ENCODE measurements at regions of chr1 and their contacts with region 1.

Region 1: GRCh38 chr1:65958561-65959350 is 166.1 kb downstream of the PDE4B start:
- DNase-seq: peak in 10 of 14 experiments; percentile 1 to 73 (median 8)
- ATAC-seq: peak; percentile 68
- H3K4me3 ChIP-seq: no peak overlapping the region
- H3K4me3 Mint-ChIP-seq: no peak overlapping the region
- H3K27ac ChIP-seq: no peak overlapping the region
- H3K27ac Mint-ChIP-seq: no peak overlapping the region
- H3K4me1 ChIP-seq: no peaks in the 10 kb centered on the region
- H3K4me1 Mint-ChIP-seq: no peaks in the 10 kb centered on the region
- H3K27me3 ChIP-seq: peaks cover 0 to 5% of the 10 kb centered on the region in 2 experiments
- H3K27me3 Mint-ChIP-seq: no peaks in the 10 kb centered on the region
- CTCF ChIP-seq: peak; percentile 97

Region 2: GRCh38 chr1:65493802-65494201 is 465.0 kb before region 1 on chr1:
- CTCF ChIA-PET with region 1: no interaction called
- POLR2A ChIA-PET with region 1: no interaction called
- intact Hi-C with region 1: no loop called
- DNase-seq: no peak
- ATAC-seq: no peak
- H3K4me3 ChIP-seq: no peak overlapping the region
- H3K4me3 Mint-ChIP-seq: no peak overlapping the region
- H3K27ac ChIP-seq: no peak overlapping the region
- H3K27ac Mint-ChIP-seq: no peak overlapping the region
- H3K4me1 ChIP-seq: no peaks in the 10 kb centered on the region
- H3K4me1 Mint-ChIP-seq: no peaks in the 10 kb centered on the region
- H3K27me3 ChIP-seq: no peaks in the 10 kb centered on the region
- H3K27me3 Mint-ChIP-seq: no peaks in the 10 kb centered on the region
- CTCF ChIP-seq: no peak

Region 3: DNA sequence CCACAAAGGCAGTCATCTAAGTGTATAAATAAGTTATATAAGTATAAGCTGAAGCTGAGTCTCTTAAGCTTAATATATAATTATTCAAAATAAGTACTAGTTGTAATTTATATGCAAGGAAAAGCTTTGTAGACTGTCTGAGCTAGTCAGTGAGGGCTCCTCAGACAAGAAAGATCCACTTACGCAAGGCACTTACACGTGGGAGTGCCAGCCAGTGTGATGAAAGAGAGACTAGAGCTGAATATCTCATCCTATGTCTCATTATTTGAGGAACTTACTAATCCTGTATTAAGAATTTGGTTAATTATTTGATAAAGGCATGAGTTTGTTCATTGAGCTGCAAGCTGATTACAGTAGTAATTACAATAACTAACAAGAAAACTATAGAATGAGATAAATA is 19.1 kb before region 1 on chr1:
- CTCF ChIA-PET with region 1: no interaction called
- POLR2A ChIA-PET with region 1: no interaction called
- intact Hi-C with region 1: no loop called
- DNase-seq: peak in 1 of 14 experiments; percentile 12
- ATAC-seq: no peak
- H3K4me3 ChIP-seq: no peak overlapping the region
- H3K4me3 Mint-ChIP-seq: no peak overlapping the region
- H3K27ac ChIP-seq: no peak overlapping the region
- H3K27ac Mint-ChIP-seq: no peak overlapping the region
- H3K4me1 ChIP-seq: no peaks in the 10 kb centered on the region
- H3K4me1 Mint-ChIP-seq: no peaks in the 10 kb centered on the region
- H3K27me3 ChIP-seq: no peaks in the 10 kb centered on the region
- H3K27me3 Mint-ChIP-seq: peaks cover 6% of the 10 kb centered on the region
- CTCF ChIP-seq: no peak

Region 4: DNA sequence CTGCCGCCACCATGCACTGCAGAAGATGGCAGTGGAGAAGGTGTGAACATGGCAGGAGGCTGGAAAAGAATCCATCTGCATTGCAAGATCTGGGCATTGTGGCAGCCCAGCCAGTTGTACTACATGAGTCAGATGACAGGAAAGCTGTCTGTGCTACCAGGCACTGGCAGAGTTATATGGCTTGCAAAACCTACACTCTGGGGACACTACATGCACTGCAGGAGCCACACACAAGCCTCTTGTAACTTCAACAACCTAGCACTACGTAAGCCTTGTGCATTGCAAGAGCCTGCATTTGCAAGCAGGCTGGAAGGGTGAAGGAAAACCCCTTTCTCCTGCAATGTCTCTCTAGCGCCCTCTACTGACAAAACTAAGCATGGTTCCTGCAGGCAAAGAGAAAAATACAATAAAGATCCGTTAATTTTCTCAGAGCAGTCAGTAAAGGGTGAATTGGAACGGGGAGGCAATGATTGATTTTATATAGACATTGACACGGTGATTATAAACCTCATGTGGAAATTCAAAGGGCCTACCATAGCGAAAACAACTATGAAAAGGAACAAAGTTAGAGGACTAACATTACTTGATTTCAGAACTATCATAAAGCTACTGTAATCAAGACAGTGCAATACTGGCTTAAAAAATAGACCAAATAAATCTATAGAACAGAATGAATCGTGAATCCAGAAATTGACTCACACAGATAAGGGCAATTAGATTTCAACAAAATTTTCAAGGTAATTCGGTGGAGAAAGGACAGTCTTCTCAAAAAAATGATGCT is 767.3 kb after region 1 on chr1:
- CTCF ChIA-PET with region 1: no interaction called
- POLR2A ChIA-PET with region 1: no interaction called
- intact Hi-C with region 1: loop called (anchors 5 kb)
- DNase-seq: peak in 13 of 14 experiments; percentile 3 to 83 (median 33)
- ATAC-seq: peak; percentile 68
- H3K4me3 ChIP-seq: no peak overlapping the region
- H3K4me3 Mint-ChIP-seq: no peak overlapping the region
- H3K27ac ChIP-seq: no peak overlapping the region
- H3K27ac Mint-ChIP-seq: no peak overlapping the region
- H3K4me1 ChIP-seq: peaks cover 2% of the 10 kb centered on the region
- H3K4me1 Mint-ChIP-seq: peaks cover 19% of the 10 kb centered on the region
- H3K27me3 ChIP-seq: peaks cover 0 to 3% of the 10 kb centered on the region in 2 experiments
- H3K27me3 Mint-ChIP-seq: peaks cover 15% of the 10 kb centered on the region
- CTCF ChIP-seq: peak; percentile 97

Measured in CD4-positive, alpha-beta T cell (primary cell).